ENCODE measurements at regions of chr16 and their contacts with region 1.

Region 1: DNA sequence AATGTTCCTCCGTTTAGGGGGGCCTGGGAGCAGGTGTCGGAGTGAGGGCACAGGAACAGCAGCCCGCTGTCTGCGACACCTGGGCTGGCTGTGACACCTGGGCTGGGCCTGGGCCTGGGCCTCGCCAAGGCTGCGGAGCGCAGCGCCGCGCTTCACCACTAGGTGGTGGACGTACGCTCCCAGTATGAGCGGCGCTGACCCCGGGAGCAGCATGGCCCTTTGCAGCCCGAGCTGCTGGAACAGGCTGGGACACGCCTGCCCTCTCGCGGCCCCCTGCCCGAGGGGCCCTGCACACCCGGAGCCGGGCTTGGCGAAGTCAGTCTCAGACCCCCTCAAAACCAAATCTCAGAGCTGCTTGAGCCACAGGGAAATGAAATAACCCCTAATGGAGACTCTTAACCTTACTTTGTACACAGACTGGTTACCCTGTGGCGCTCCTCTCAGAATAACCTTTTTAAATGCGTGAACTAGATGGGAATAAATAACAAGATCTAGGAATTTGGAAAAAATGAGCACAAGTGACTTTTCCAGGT is 38.6 kb upstream of the FA2H start:
- DNase-seq: peak; percentile 85
- H3K4me3 ChIP-seq: no peak overlapping the region
- H3K27ac ChIP-seq: no peak overlapping the region
- H3K4me1 ChIP-seq: peaks cover 0 to 7% (median 2%) of the 10 kb centered on the region in 4 donors
- H3K27me3 ChIP-seq: no peaks in the 10 kb centered on the region
- CTCF ChIP-seq: peak; percentile 90 to 97 (median 96)
- EP300 ChIP-seq: no peak
- POLR2A ChIP-seq: no peak

Region 2: DNA sequence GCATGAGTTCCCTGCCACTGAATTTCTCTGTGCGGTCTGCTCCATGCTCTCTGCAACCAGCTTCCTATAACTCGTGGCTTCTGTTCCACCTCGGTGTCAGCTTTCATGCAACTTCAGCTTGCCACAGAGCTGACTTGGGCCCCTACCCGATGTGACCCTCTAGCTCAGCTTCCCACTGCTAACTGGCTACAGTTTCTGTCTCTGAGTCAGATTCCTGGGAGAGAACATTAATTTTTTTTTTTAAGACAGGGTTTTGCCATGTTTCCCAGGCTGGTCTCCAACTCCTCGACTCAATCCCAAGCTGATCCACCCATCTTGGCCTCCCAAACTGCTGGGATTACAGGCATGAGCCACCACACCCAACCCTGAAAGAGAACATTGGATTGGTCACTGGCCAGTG is 552.1 kb before region 1 on chr16:
- in situ Hi-C with region 1: no loop called
- intact Hi-C with region 1: loop called (anchors 10 kb)
- DNase-seq: no peak
- H3K4me3 ChIP-seq: no peak overlapping the region
- H3K27ac ChIP-seq: no peak overlapping the region
- H3K4me1 ChIP-seq: no peaks in the 10 kb centered on the region
- H3K27me3 ChIP-seq: no peaks in the 10 kb centered on the region
- CTCF ChIP-seq: no peak
- EP300 ChIP-seq: no peak
- POLR2A ChIP-seq: no peak